PC-9 (cell line): ENCODE measurements at regions of chr15 and their contacts with region 1.

Region 1: GRCh38 chr15:66997212-66997611 is 68.2 kb upstream of the SMAD3 start:
- DNase-seq: peak; percentile 19 to 88
- H3K4me3 ChIP-seq: no peak overlapping the region
- H3K27ac ChIP-seq: no peak overlapping the region
- H3K4me1 ChIP-seq: peaks cover 21% of the 10 kb centered on the region
- H3K27me3 ChIP-seq: no peaks in the 10 kb centered on the region
- CTCF ChIP-seq: no peak

Region 2: GRCh38 chr15:66955001-66955516 is 42.2 kb before region 1 on chr15:
- CTCF ChIA-PET with region 1: interaction called, 14 read pairs
- POLR2A ChIA-PET with region 1: no interaction called
- intact Hi-C with region 1: no loop called
- DNase-seq: peak in 1 of 2 experiments; percentile 54
- H3K4me3 ChIP-seq: no peak overlapping the region
- H3K27ac ChIP-seq: no peak overlapping the region
- H3K4me1 ChIP-seq: peaks cover 23% of the 10 kb centered on the region
- H3K27me3 ChIP-seq: no peaks in the 10 kb centered on the region
- CTCF ChIP-seq: no peak

Region 3: DNA sequence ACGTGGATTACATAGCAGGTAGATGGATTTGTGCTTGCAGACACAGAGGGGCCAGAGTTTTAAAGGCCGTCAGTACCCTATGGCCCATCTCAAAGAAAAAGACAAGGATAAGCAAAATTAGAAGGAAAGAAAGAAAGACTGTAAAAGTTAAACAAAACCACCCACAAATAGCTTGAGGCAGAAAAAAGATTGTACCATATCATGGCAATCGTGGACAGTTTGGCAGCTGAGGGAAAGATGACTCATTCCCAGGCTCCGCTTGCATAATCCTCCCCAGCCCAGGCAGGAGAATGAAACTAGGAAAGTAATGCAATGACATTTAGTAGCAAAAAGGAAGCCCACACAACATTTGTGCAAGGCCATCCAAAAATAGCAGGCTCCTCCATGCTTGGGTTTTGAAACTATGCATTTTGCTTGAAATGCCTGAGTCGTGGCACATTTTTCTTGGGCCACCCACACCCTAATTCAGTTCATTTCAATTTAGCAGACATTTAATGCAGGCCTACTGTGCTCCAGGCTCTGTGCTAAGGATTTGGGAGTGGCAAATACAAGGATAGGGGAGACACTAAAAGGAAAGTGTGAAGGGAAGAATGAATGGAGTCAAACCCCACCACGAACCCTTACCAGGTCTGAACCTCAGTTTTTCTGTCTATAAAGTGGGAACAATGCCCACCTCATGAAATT is 27.2 kb after region 1 on chr15:
- CTCF ChIA-PET with region 1: no interaction called
- POLR2A ChIA-PET with region 1: no interaction called
- intact Hi-C with region 1: loop called (anchors 1 kb)
- DNase-seq: peak; percentile 75 to 83
- H3K4me3 ChIP-seq: no peak overlapping the region
- H3K27ac ChIP-seq: peak overlapping the region; percentile 82
- H3K4me1 ChIP-seq: peaks cover 65% of the 10 kb centered on the region
- H3K27me3 ChIP-seq: no peaks in the 10 kb centered on the region
- CTCF ChIP-seq: no peak

Region 4: GRCh38 chr15:67039384-67040075 is 42.3 kb after region 1 on chr15:
- CTCF ChIA-PET with region 1: no interaction called
- POLR2A ChIA-PET with region 1: no interaction called
- intact Hi-C with region 1: loop called (anchors 1 kb)
- DNase-seq: peak; percentile 72 to 92
- H3K4me3 ChIP-seq: peak overlapping the region; percentile 39; the same call in 1 of the 2 replicates
- H3K27ac ChIP-seq: no peak overlapping the region
- H3K4me1 ChIP-seq: peaks cover 14% of the 10 kb centered on the region
- H3K27me3 ChIP-seq: no peaks in the 10 kb centered on the region
- CTCF ChIP-seq: no peak